Left cardiac atrium (tissue), 4 donors: ENCODE measurements at regions of chr20 and their contacts with region 1.

Region 1: GRCh38 chr20:48620519-48621254 is 207.1 kb downstream of the PREX1 start:
- DNase-seq: peak; percentile 89
- ATAC-seq: peak; percentile 91 to 94

Region 2: GRCh38 chr20:47663333-47664067 is 957.2 kb before region 1 on chr20:
- intact Hi-C with region 1: loop called (anchors 1 to 5 kb)
- DNase-seq: peak; percentile 76
- ATAC-seq: peak; percentile 81 to 84

Region 3: DNA sequence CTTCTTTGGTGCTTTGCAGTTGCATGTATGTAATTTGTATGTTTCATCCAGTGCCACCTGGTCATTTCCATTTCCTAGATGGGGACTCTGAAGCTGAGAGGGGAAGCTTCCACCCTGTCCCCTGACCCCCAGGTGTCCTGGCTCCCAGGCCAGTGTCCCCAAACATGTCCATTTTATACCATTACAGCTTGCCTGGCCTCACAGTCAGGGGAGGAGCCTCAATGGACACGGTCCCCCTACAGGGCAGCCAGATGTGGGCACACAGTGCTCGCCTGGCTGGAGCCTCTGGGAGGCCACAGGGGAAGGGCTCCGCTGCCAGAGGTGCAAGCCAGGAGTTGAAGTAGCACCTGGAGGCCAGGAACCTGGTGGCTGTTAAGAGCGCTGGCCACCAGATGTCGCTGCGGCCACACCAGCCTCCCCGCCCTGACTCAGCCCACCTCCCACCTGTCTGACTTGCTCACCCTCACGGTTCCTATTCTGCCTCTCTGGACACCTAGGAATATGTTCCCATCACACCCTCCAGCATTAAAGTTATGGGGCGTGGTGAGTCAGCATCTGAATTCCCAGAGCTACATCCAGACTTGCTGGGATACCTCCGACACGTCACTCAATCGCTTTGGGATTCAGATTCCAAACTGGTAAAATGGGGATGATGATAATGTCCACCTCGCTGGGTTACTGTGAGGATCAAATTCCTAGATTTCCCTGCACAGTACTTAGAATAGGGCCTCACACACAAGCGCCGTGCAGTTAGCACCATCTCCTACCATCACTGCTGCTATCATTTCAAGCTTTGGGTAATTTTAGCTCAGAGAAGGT is 942.8 kb before region 1 on chr20:
- intact Hi-C with region 1: loop called (anchors 5 kb)
- DNase-seq: peak; percentile 42
- ATAC-seq: peak in 1 of 2 donors; percentile 24

Region 4: DNA sequence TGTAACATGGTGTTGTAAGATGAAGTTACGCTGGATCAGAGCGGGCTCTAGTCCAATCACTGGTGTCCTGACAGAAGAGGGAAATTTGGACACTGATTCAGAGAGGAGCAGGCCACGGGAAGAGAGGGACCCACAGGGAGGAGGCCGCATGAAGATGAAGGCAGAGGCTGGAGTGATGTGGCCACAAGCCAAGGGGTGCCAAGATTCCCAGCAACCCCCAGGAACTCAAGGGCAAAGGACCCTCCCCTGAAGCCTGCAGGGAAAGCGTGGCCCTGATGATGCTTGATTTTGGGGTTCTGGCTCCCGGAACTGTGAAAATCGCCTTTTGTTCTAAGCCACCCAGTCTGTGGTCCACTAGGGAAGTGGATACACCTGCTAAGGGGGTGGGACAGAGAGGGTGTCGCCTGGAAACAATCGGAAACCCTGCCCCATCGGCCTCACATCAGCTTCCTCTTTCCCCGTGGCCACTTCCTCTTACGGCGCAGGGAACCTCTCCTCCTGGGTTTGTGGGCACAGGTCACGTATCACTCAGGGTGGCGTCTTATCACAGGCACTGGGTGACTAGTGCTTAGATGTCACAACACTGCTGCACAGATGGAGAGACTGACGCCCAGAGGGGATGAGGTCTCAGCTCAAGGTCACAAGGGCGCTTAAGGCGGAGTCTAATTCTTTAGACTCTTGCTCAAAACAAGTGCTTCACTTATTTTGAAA is 893.4 kb before region 1 on chr20:
- intact Hi-C with region 1: loop called in 1 of 2 experiments (anchors 2 kb)
- DNase-seq: peak; percentile 54
- ATAC-seq: peak; percentile 60 to 79

Region 5: DNA sequence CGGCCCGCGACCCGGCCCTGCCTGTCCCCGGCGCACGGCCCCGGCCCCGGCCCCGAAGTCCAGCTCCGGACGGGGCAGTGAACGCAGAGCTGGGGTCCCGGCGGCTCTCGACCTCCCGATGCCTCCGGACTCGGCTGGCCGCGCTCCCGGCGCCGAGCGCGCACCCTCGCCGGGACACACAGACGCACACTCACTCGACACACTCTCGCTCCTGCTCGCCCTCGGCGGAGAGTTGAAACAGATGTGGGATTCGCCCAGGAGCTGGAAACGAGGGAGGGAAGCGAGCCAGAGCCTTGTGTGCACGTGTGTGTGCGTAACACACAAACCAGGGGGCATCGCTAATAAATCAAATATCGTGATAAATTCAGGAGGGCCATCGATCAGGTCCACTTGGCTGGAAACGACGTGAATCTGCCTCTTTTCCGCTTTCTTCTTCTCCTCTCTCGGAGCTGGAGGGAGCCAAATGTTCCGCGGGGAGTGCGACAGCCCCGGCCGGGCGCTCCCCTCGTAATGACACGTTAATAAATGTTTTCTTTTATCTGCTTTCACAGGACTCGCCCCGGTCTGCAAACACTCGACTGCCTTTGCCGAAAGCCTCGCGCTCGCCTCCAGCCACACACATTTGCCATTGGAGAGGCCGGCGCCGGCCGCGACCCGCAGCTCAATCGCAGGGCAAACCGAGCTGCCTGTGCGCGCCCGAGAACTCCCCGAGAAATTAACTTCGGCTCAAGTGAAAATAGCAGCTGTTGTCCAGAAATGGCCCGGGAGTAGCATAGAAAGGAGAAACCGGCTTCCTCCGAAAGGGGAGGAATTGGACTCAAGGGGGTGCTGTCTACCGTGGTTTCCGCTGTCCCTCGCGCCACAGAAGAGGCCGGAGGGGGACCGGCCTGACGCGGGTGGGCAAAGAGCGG is 834.6 kb before region 1 on chr20:
- intact Hi-C with region 1: loop called (anchors 1 to 5 kb)
- DNase-seq: peak; percentile 75
- ATAC-seq: peak; percentile 85 to 89